MCF 10A (cell line): ENCODE measurements at regions of chr3 and their contacts with region 1.

Region 1: DNA sequence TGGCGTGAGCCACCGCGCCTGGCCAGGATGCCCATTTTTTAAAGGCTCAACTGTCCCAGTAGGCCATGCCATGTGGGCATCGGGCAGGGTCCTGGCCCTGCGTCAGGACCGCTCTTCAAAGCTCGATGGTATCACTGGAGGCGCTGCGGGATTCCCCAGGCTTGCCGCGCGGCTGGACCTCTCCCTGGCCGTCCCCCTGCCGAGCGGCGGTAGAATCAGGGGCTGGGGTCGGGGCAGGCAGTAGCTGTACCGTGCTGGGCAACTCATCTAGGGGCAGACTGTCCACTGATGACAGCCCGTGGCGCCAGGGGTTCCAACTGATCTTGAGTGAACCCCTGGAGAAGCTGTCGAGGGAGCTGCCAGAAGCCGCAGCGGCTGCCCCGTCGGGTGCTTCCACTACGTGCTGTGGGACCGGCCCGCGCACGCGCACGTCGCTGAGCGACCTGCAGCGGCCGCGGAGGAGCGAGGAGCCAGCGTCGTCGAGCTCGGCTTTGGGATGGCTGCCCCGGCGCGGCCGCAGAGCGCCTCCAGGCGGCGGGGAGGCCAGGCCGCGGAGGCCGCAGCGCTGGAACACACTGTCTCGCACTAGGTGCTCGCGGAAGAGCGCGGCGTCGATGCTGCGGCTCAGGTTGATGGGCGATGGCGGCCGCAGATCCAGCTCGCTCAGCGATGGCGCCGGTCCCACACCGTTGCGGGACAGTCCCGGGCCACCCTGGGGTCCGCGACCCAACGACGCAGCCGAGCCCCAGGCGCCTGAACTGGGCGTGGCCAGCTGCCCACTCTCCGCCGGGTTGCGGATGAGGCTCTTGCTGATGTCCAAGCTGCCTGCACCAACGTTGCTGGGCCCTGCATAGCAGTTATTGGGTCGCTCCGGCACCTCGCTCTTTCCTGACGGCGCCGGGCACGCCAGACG is 5.8 kb downstream of the PRRT3 start:
- DNase-seq: peak; percentile 90
- H3K4me3 Mint-ChIP-seq: peak overlapping the region; percentile 88
- H3K27ac Mint-ChIP-seq: peak overlapping the region; percentile 82
- H3K4me1 Mint-ChIP-seq: no peaks in the 10 kb centered on the region
- H3K27me3 Mint-ChIP-seq: no peaks in the 10 kb centered on the region
- CTCF ChIP-seq: peak; percentile 82

Region 2: GRCh38 chr3:9809615-9810432 is 136.5 kb before region 1 on chr3 and contains the start of gene TTLL3:
- CTCF ChIA-PET with region 1: interaction called, 10 read pairs
- POLR2A ChIA-PET with region 1: interaction called, 5 read pairs
- intact Hi-C with region 1: no loop called
- DNase-seq: peak; percentile 62
- H3K4me3 Mint-ChIP-seq: peak within 1 kb of the TSS; percentile 70
- H3K27ac Mint-ChIP-seq: peak within 1 kb of the TSS; percentile 89
- H3K4me1 Mint-ChIP-seq: peaks cover 23% of the 10 kb centered on the region
- H3K27me3 Mint-ChIP-seq: no peaks in the 10 kb centered on the region
- CTCF ChIP-seq: no peak
- total RNA-seq, gene TTLL3: 14.6 and 16.6 TPM in 2 replicates

Region 3: DNA sequence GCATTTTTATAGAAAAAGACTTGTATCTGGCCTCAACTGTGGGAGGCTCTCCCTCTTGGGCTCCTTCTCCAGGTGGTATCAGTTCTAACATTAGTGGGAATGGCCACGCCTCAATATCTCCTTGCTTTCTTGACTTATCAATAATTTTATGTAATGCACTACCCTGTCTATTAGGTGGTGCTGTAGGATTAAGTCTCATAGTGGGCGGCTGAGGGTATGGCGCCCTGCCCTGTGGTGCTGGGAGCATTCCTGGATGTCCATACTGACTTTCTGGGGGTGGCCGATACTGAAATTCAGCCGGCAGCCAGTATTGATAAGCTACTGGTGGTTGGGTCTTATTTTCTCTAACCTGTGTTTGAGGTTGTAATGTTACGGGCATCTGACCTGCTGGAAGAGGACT is 93.8 kb before region 1 on chr3:
- CTCF ChIA-PET with region 1: interaction called, 22 read pairs
- POLR2A ChIA-PET with region 1: interaction called, 22 read pairs
- intact Hi-C with region 1: loop called (anchors 1 kb)
- DNase-seq: no peak
- H3K4me3 Mint-ChIP-seq: no peak overlapping the region
- H3K27ac Mint-ChIP-seq: peak overlapping the region; percentile 49
- H3K4me1 Mint-ChIP-seq: peaks cover 35% of the 10 kb centered on the region
- H3K27me3 Mint-ChIP-seq: no peaks in the 10 kb centered on the region
- CTCF ChIP-seq: no peak

Region 4: DNA sequence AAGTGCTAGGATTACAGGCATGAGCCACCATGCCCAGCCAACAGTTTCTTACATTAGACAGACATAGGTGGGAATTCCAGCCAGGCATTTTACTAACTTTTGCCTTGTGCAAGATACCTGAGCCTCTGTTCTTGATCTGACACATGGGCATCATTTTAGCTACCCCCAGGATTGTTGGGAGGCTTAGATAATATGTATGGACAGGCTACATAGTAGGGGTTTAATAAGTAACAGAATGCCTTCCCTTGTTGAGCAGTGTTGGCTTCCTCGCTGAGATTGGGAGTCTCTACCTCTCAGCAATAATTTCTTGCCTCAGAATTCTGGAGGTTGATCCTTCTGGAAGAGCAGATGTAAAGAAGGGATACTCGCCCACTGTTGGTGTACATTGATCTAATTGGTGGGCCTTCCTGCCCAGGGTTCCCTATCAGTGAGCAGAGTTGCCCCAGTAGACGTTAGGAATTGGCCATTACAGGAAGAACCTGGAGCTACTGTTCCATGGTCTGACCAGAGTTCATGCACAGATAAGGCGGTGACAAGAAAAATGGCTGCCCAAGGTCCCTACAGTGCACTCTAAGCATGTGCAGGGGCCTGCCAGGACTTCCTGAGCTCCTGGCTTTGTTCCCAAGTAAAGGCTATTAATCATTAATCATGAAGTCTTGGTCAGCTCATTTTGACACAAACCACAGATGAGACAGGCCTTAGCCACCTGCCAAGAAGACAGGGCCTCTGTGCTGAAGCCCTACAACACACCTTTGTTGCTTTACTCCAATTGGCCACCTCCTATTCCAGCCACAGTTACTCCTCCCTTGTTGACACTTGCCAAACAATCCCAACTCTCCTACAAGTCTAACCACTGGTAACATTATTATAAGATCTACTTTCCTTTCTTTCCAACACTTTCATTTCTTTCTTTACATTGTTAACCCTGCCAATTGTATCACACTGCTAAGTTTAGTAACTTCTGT is 48.7 kb before region 1 on chr3:
- CTCF ChIA-PET with region 1: interaction called, 9 read pairs
- POLR2A ChIA-PET with region 1: interaction called, 16 read pairs
- intact Hi-C with region 1: no loop called
- DNase-seq: peak; percentile 96
- H3K4me3 Mint-ChIP-seq: peak overlapping the region; percentile 33
- H3K27ac Mint-ChIP-seq: peak overlapping the region; percentile 79
- H3K4me1 Mint-ChIP-seq: peaks cover 59% of the 10 kb centered on the region
- H3K27me3 Mint-ChIP-seq: no peaks in the 10 kb centered on the region
- CTCF ChIP-seq: no peak

Region 5: DNA sequence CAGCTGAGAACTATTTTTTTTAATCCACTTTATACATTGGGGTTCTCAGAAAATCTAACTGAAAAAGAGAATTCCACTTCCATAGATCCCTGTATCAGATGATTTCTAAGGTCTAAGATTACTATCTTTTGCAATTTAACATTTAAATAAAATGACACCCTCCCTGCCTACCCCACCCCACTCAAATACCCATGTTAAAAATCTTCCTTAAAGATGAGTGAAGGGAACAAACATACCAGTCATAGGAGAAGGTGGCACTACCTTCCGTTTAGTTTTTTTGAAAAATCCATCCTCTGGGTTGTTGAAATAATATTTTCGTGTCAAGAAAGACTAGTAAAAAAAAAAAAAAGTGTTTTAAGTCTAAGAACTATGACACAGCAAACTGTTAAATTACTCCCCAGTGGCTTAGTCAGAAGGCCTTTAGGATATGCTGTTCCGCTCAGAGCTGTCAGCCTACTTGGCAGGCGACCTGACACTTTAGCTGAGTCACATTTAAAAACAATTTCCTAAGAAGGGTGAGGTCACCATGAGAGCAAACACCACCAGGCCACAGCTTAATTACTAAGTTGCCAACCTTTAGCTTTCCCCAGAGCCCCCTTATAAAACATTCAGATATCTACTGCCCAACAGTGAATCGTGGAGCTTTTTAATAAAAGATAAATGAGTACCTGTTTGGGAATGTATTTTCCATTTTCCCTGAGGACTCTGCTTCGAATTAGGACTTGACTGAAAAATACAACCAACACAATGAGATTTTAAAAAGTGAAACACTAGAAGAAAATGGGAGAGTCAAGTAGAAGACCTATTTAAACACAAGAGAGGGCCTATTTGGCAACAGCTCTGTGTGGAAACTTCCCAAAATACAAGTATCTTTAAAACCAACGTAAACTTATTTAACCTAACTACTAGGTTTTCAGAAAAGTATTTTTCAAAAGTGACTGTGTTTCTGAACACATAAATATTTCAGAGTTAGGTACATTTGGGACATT is 30.6 kb after region 1 on chr3:
- CTCF ChIA-PET with region 1: interaction called, 6 read pairs
- POLR2A ChIA-PET with region 1: interaction called, 23 read pairs
- intact Hi-C with region 1: no loop called
- DNase-seq: peak; percentile 97
- H3K4me3 Mint-ChIP-seq: peak overlapping the region; percentile 39
- H3K27ac Mint-ChIP-seq: peak overlapping the region; percentile 70
- H3K4me1 Mint-ChIP-seq: peaks cover 26% of the 10 kb centered on the region
- H3K27me3 Mint-ChIP-seq: no peaks in the 10 kb centered on the region
- CTCF ChIP-seq: no peak

Region 6: GRCh38 chr3:10055097-10055496 is 108.7 kb after region 1 on chr3:
- CTCF ChIA-PET with region 1: no interaction called
- POLR2A ChIA-PET with region 1: no interaction called
- intact Hi-C with region 1: no loop called
- DNase-seq: no peak
- H3K4me3 Mint-ChIP-seq: no peak overlapping the region
- H3K27ac Mint-ChIP-seq: no peak overlapping the region
- H3K4me1 Mint-ChIP-seq: no peaks in the 10 kb centered on the region
- H3K27me3 Mint-ChIP-seq: no peaks in the 10 kb centered on the region
- CTCF ChIP-seq: no peak

Region 7: DNA sequence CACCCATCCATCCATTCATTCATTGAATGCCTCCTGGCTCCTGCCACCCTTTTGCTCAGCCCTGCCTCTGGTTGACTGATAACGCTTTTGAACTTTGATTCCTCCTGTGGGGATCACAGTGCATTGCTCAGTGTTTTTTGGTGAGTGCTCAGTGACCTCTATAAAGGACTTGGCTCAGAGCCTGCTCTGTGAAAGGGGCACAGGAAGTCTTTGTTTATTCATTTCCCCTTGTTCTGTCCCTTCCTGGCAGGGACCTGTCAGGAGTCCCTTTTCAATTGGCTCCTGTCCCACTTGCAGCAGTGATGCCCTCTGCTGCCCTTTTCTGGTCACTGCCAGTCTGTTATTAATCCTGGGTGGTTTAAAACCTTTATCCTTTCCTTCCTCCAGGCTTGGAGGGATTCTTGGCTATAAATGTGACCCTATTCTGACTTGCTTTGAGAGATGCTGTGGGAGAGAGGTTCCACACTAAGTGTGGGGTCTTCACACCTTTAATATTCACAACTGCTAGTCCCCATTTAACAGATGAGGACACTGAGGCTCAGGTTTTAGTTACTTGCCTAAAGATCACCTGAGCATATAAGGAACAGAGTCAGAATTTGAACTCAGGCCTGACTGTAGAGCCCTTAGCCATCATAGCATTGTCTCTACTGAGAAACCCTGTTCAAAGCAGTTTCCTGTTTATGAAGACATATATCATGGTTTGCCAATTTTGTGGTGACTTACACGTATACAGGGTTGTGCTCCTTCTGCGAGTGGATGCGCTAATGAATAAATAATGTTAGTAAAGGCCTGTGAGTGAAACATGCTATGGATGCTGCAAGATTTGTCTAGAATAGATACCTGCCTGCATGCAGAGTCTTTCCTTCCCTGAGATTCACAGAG is 278.7 kb after region 1 on chr3:
- CTCF ChIA-PET with region 1: interaction called, 3 read pairs
- POLR2A ChIA-PET with region 1: no interaction called
- intact Hi-C with region 1: loop called (anchors 1 kb)
- DNase-seq: peak; percentile 88
- H3K4me3 Mint-ChIP-seq: no peak overlapping the region
- H3K27ac Mint-ChIP-seq: no peak overlapping the region
- H3K4me1 Mint-ChIP-seq: peaks cover 21% of the 10 kb centered on the region
- H3K27me3 Mint-ChIP-seq: no peaks in the 10 kb centered on the region
- CTCF ChIP-seq: peak; percentile 78

Region 8: DNA sequence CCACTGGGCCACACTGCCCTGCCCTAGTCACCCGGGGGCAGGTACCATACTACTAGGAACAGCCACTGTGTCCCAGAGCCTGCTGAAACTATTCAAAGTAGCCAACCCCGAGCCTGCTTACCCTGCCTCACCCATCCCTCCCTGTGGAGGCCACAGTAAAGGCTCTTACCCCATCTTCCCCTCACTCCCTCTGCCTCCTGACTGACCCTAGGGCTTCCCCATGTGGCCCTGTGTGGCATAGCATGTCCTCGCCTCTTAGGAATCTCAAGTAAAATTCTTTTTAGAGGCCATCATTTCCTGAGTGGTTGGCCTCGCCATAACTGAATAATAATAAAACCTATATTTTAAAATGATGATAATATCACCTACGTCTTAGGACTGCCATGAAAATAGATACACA is 757.5 kb after region 1 on chr3:
- CTCF ChIA-PET with region 1: no interaction called
- POLR2A ChIA-PET with region 1: no interaction called
- intact Hi-C with region 1: no loop called
- DNase-seq: peak; percentile 42
- H3K4me3 Mint-ChIP-seq: no peak overlapping the region
- H3K27ac Mint-ChIP-seq: no peak overlapping the region
- H3K4me1 Mint-ChIP-seq: no peaks in the 10 kb centered on the region
- H3K27me3 Mint-ChIP-seq: peaks cover 59% of the 10 kb centered on the region
- CTCF ChIP-seq: peak; percentile 18